Mammary epithelial cell (primary cell): ENCODE measurements at regions of chr13 and their contacts with region 1.

Region 1: GRCh38 chr13:67224148-67224846 is 5.8 kb downstream of the PCDH9 start:
- DNase-seq: peak; percentile 56
- H3K4me3 ChIP-seq: no peak overlapping the region
- H3K27ac ChIP-seq: no peak overlapping the region
- H3K4me1 ChIP-seq: peaks cover 5% of the 10 kb centered on the region
- H3K27me3 ChIP-seq: peaks cover 4% of the 10 kb centered on the region
- CTCF ChIP-seq: peak; percentile 58 to 73

Region 2: DNA sequence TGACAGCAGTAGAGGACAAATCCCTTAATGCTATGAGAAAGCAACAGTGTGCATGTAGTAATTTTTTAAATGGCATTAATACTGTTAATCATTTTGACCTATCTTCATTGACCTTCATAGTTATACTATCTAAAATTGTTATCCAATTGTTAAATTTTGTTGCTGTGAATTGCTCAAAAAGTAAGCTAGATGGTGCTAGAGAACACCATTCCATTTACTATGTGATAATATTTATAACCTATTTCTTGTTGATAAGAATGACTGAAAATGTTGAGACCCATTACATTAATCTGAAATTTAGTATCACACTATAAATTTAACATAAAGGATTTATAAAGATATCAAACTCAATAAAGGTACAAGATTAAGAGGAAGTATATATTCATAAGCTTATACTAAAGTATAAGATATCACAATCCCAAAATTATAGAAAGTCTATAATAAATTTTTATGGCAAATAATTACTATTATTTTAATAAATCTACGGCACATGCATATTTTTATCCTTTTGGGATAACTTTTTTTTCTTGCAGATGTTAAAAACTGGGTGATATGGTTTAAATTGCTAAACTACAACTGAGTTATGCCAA is 1567.5 kb before region 1 on chr13:
- CTCF ChIA-PET with region 1: no interaction called
- dilution Hi-C with region 1: no loop called
- in situ Hi-C with region 1: loop called in 1 of 2 experiments (anchors 25 kb)
- intact Hi-C with region 1: loop called (anchors 1 kb)
- DNase-seq: no peak
- H3K4me3 ChIP-seq: no peak overlapping the region
- H3K27ac ChIP-seq: no peak overlapping the region
- H3K4me1 ChIP-seq: no peaks in the 10 kb centered on the region
- H3K27me3 ChIP-seq: no peaks in the 10 kb centered on the region
- CTCF ChIP-seq: peak; percentile 46 to 60

Region 3: GRCh38 chr13:66618702-66619101 is 605.6 kb before region 1 on chr13:
- CTCF ChIA-PET with region 1: no interaction called
- dilution Hi-C with region 1: no loop called
- in situ Hi-C with region 1: no loop called
- intact Hi-C with region 1: loop called (anchors 1 kb)
- DNase-seq: peak; percentile 14
- H3K4me3 ChIP-seq: no peak overlapping the region
- H3K27ac ChIP-seq: no peak overlapping the region
- H3K4me1 ChIP-seq: no peaks in the 10 kb centered on the region
- H3K27me3 ChIP-seq: no peaks in the 10 kb centered on the region
- CTCF ChIP-seq: peak; percentile 50 to 64

Region 4: GRCh38 chr13:66926851-66927524 is 297.3 kb before region 1 on chr13:
- CTCF ChIA-PET with region 1: no interaction called
- dilution Hi-C with region 1: no loop called
- in situ Hi-C with region 1: no loop called
- intact Hi-C with region 1: loop called (anchors 1 kb)
- DNase-seq: peak; percentile 87
- H3K4me3 ChIP-seq: no peak overlapping the region
- H3K27ac ChIP-seq: peak overlapping the region; percentile 72
- H3K4me1 ChIP-seq: peaks cover 21% of the 10 kb centered on the region
- H3K27me3 ChIP-seq: no peaks in the 10 kb centered on the region
- CTCF ChIP-seq: peak in 1 of 2 donors; percentile 42

Region 5: DNA sequence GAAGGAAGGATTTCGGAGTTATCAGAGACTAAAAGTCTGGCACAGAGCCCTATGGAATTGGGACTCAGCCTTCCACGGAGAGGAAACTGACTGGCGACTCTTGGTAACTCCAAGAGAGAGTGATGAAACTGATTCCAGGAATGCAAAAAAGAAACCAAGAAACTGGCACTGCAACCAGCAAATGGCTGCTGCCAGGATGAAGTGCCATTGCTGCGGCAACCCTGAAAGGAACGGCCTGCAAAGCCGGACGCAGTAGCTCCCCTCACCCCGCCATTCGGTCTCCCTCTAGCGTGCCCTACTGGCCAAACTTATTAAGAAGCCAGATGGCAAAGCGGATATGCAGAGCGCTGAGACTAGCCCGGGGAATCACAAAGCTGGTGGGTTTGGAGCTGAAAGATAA is 230.2 kb before region 1 on chr13:
- CTCF ChIA-PET with region 1: no interaction called
- dilution Hi-C with region 1: no loop called
- in situ Hi-C with region 1: no loop called
- intact Hi-C with region 1: loop called (anchors 1 kb)
- DNase-seq: peak; percentile 66
- H3K4me3 ChIP-seq: peak overlapping the region; percentile 18 to 38 (median 23)
- H3K27ac ChIP-seq: no peak overlapping the region
- H3K4me1 ChIP-seq: peaks cover 18% of the 10 kb centered on the region
- H3K27me3 ChIP-seq: no peaks in the 10 kb centered on the region
- CTCF ChIP-seq: peak; percentile 77 to 93

Region 6: GRCh38 chr13:67075239-67075638 is 149.1 kb before region 1 on chr13:
- CTCF ChIA-PET with region 1: interaction called, 3 read pairs
- dilution Hi-C with region 1: no loop called
- in situ Hi-C with region 1: loop called in 1 of 2 experiments (anchors 10 kb)
- intact Hi-C with region 1: loop called (anchors 1 kb)
- DNase-seq: peak; percentile 3
- H3K4me3 ChIP-seq: no peak overlapping the region
- H3K27ac ChIP-seq: no peak overlapping the region
- H3K4me1 ChIP-seq: no peaks in the 10 kb centered on the region
- H3K27me3 ChIP-seq: no peaks in the 10 kb centered on the region
- CTCF ChIP-seq: peak in 1 of 2 donors; percentile 42